ENCODE measurements at regions of chr21 and their contacts with region 1.

Region 1: DNA sequence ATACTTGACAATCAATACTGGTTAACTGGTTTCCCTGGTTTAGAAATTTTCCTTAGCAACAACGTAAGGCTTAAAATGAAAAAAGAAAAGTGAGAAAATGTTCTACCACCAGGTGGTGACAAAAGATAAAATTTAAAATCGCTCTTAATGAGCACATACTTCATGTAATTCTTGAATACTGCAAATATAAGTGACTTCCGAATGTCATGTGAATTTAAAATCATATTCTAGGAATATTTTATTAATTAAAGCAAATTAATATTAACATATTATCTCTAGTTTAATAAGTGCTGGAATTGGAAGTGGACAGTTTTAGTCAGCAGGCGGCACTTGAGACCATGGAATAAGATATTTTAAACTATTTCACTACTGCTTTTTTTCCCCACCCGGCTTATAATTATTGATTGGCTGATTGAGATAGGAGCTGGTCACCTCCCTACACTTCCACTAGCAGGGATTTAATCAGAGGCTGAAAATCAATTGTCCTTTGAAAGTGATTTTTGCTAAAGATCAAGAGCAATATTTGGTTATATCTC is 5.0 kb upstream of the ADAMTS1 start:
- DNase-seq: peak; percentile 32
- H3K4me3 ChIP-seq: peak overlapping the region in 1 of 3 experiments; percentile 13
- H3K27ac ChIP-seq: no peak overlapping the region
- H3K4me1 ChIP-seq: peaks cover 12% of the 10 kb centered on the region
- H3K27me3 ChIP-seq: no peaks in the 10 kb centered on the region
- CTCF ChIP-seq: peak; percentile 31 to 50

Region 2: GRCh38 chr21:26743524-26743923 is 106.7 kb before region 1 on chr21:
- CTCF ChIA-PET with region 1: no interaction called
- dilution Hi-C with region 1: no loop called
- in situ Hi-C with region 1: no loop called
- intact Hi-C with region 1: no loop called
- DNase-seq: no peak
- H3K4me3 ChIP-seq: no peak overlapping the region
- H3K27ac ChIP-seq: no peak overlapping the region
- H3K4me1 ChIP-seq: no peaks in the 10 kb centered on the region
- H3K27me3 ChIP-seq: no peaks in the 10 kb centered on the region
- CTCF ChIP-seq: no peak

Region 3: GRCh38 chr21:27423038-27423437 is 572.9 kb after region 1 on chr21:
- CTCF ChIA-PET with region 1: no interaction called
- dilution Hi-C with region 1: no loop called
- in situ Hi-C with region 1: no loop called
- intact Hi-C with region 1: loop called (anchors 10 kb)
- DNase-seq: peak; percentile 90
- H3K4me3 ChIP-seq: no peak overlapping the region
- H3K27ac ChIP-seq: peak overlapping the region; percentile 62
- H3K4me1 ChIP-seq: peaks cover 40% of the 10 kb centered on the region
- H3K27me3 ChIP-seq: no peaks in the 10 kb centered on the region
- CTCF ChIP-seq: no peak

Region 4: GRCh38 chr21:27700974-27701614 is 850.9 kb after region 1 on chr21:
- CTCF ChIA-PET with region 1: interaction called, 3 read pairs
- dilution Hi-C with region 1: no loop called
- in situ Hi-C with region 1: loop called (anchors 5 kb)
- intact Hi-C with region 1: loop called (anchors 1 kb)
- DNase-seq: peak; percentile 77
- H3K4me3 ChIP-seq: no peak overlapping the region
- H3K27ac ChIP-seq: no peak overlapping the region
- H3K4me1 ChIP-seq: no peaks in the 10 kb centered on the region
- H3K27me3 ChIP-seq: no peaks in the 10 kb centered on the region
- CTCF ChIP-seq: peak; percentile 76 to 92

Region 5: GRCh38 chr21:28063241-28064216 is 1213.4 kb after region 1 on chr21:
- CTCF ChIA-PET with region 1: no interaction called
- dilution Hi-C with region 1: no loop called
- in situ Hi-C with region 1: loop called in 1 of 2 experiments (anchors 10 kb)
- intact Hi-C with region 1: no loop called
- DNase-seq: no peak
- H3K4me3 ChIP-seq: no peak overlapping the region
- H3K27ac ChIP-seq: no peak overlapping the region
- H3K4me1 ChIP-seq: no peaks in the 10 kb centered on the region
- H3K27me3 ChIP-seq: no peaks in the 10 kb centered on the region
- CTCF ChIP-seq: no peak

Region 6: GRCh38 chr21:28516991-28517592 is 1666.9 kb after region 1 on chr21:
- CTCF ChIA-PET with region 1: no interaction called
- dilution Hi-C with region 1: no loop called
- in situ Hi-C with region 1: no loop called
- intact Hi-C with region 1: loop called (anchors 2 kb)
- DNase-seq: peak; percentile 47
- H3K4me3 ChIP-seq: no peak overlapping the region
- H3K27ac ChIP-seq: no peak overlapping the region
- H3K4me1 ChIP-seq: peaks cover under 1% of the 10 kb centered on the region
- H3K27me3 ChIP-seq: no peaks in the 10 kb centered on the region
- CTCF ChIP-seq: peak; percentile 59 to 91

Measured in mammary epithelial cell (primary cell).